Esophagus muscularis mucosa (tissue), 4 donors: ENCODE measurements at regions of chr19 and their contacts with region 1.

Region 1: DNA sequence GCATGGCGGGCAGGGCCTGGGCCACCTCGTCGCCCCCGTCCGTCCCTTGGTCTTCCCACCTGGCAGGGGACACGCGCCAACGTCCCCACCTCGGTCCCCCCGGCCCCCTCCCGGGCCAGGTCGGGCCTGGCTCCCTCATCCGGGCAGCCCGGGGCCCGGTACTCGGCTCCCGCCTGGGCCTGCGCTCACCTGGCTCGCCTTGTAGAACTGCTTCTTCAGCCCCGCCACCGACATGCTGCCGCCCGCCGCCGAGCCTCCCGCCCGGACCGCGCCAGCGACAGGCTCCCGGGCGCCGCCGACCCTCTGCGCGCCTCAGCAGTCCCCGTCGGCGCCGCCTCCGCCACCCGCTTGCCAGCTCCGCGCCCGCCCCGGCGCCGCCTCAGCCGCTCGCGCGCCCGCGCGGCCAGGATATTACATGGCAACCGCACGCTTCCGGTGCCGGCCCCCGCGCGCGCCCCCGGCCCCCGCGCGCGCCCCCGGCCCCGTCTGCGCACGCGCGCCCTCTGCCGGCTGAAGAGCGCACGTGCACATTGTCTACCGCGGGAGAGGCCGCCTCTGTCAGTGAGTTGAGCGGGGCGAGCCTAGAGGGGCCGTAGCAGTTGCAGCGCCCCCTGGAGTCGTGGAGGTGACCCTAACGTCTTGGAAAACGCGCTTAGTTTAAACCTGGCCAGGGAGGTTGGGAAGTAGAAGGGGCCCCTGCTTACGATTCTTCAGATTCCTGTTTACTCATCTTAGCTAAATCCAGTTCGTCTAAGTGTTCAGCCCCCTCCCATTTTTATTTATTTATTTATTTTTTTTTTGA is at the start of gene SH3GL1:
- DNase-seq: peak; percentile 98
- H3K4me3 ChIP-seq: peak within 1 kb of the TSS; percentile 93 to 99 (median 96)
- H3K27ac ChIP-seq: peak within 1 kb of the TSS; percentile 97 to 99 (median 98)
- H3K4me1 ChIP-seq: peaks cover 51 to 68% (median 61%) of the 10 kb centered on the region in 4 donors
- H3K27me3 ChIP-seq: no peaks in the 10 kb centered on the region
- CTCF ChIP-seq: peak; percentile 91 to 100 (median 92)
- EP300 ChIP-seq: no peak
- POLR2A ChIP-seq: peak; percentile 18
- total RNA-seq, gene SH3GL1: 49.4 to 77.2 (median 59.5) TPM

Region 2: GRCh38 chr19:4342615-4343369 is 57.5 kb before region 1 on chr19:
- intact Hi-C with region 1: loop called (anchors 2 kb)
- DNase-seq: peak; percentile 100
- H3K4me3 ChIP-seq: peak overlapping the region; percentile 81 to 99 (median 85)
- H3K27ac ChIP-seq: peak overlapping the region; percentile 95 to 97 (median 96)
- H3K4me1 ChIP-seq: peaks cover 19 to 39% (median 26%) of the 10 kb centered on the region in 4 donors
- H3K27me3 ChIP-seq: no peaks in the 10 kb centered on the region
- CTCF ChIP-seq: peak in 1 of 3 experiments; percentile 32
- EP300 ChIP-seq: no peak
- POLR2A ChIP-seq: peak; percentile 77

Region 3: GRCh38 chr19:4369888-4370260 is 30.5 kb before region 1 on chr19:
- intact Hi-C with region 1: loop called (anchors 1 kb)
- DNase-seq: no peak
- H3K4me3 ChIP-seq: peak overlapping the region; percentile 12 to 45 (median 28)
- H3K27ac ChIP-seq: peak overlapping the region; percentile 54 to 88 (median 76)
- H3K4me1 ChIP-seq: peaks cover 74 to 81% (median 77%) of the 10 kb centered on the region in 4 donors
- H3K27me3 ChIP-seq: no peaks in the 10 kb centered on the region
- CTCF ChIP-seq: peak; percentile 53 to 68 (median 62)
- EP300 ChIP-seq: no peak
- POLR2A ChIP-seq: no peak